ENCODE measurements at regions of chr10 and their contacts with region 1.

Region 1: GRCh38 chr10:101141616-101142532 is 10.8 kb downstream of the TLX1 start:
- DNase-seq: peak; percentile 77
- H3K4me3 ChIP-seq: no peak overlapping the region
- H3K27ac ChIP-seq: no peak overlapping the region
- H3K4me1 ChIP-seq: no peaks in the 10 kb centered on the region
- H3K27me3 ChIP-seq: peaks cover 90 to 94% of the 10 kb centered on the region in 2 experiments
- CTCF ChIP-seq: peak; percentile 96 to 98
- POLR2A ChIP-seq: no peak

Region 2: GRCh38 chr10:100697070-100697469 is 444.8 kb before region 1 on chr10:
- CTCF ChIA-PET with region 1: no interaction called
- POLR2A ChIA-PET with region 1: no interaction called
- dilution Hi-C with region 1: no loop called
- intact Hi-C with region 1: no loop called
- DNase-seq: peak; percentile 44
- H3K4me3 ChIP-seq: no peak overlapping the region
- H3K27ac ChIP-seq: no peak overlapping the region
- H3K4me1 ChIP-seq: no peaks in the 10 kb centered on the region
- H3K27me3 ChIP-seq: peaks cover 6 to 18% of the 10 kb centered on the region in 2 experiments
- CTCF ChIP-seq: no peak
- POLR2A ChIP-seq: no peak

Region 3: GRCh38 chr10:101018600-101019439 is 123.1 kb before region 1 on chr10:
- CTCF ChIA-PET with region 1: interaction called, 17 read pairs
- POLR2A ChIA-PET with region 1: no interaction called
- dilution Hi-C with region 1: no loop called
- intact Hi-C with region 1: no loop called
- DNase-seq: peak; percentile 82
- H3K4me3 ChIP-seq: no peak overlapping the region
- H3K27ac ChIP-seq: no peak overlapping the region
- H3K4me1 ChIP-seq: no peaks in the 10 kb centered on the region
- H3K27me3 ChIP-seq: no peaks in the 10 kb centered on the region
- CTCF ChIP-seq: peak; percentile 90 to 93
- POLR2A ChIP-seq: no peak

Region 4: DNA sequence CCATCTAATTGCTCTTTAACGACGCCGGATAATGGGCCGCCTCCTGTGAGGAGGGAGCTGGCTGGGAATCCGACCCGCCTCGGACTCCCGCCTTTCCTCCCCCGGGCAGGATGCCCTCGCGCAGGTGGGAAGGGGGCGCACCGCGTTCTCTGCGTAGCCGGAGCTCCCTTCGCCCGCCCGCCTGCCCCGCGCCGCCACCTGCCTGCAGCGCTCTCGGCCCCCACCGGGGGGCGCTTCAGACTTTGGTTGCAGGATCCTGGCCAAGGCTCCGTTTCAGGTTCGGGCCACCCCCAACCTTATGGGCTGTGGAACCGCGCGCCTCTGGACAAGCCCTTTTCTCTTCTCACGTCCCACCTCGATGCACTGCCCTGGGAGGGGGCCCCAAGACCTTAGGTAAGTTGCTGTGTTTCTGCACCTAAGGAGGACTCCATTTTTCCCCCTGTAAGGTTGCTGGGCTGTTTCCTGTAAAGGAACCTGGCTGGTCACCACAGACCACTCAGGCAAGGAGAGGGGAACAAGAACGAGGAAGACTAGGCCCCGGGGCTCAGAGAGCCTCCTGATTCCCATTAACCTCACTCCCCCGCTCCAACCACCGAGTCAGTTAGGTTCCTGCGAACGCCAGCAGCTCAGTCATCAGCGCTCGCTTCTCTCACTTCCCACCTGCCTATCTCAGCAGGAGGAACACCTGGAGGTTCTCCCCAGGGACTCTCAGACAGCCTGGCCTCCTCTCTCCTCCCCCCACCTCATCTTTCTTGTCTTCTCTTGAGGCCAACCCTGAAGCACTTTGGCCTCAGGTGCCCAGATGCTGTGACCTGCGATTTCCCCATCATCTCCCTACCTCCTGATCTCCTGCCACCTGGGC is 91.4 kb before region 1 on chr10:
- CTCF ChIA-PET with region 1: interaction called, 134 read pairs
- POLR2A ChIA-PET with region 1: no interaction called
- dilution Hi-C with region 1: no loop called
- intact Hi-C with region 1: no loop called
- DNase-seq: peak; percentile 49
- H3K4me3 ChIP-seq: no peak overlapping the region
- H3K27ac ChIP-seq: no peak overlapping the region
- H3K4me1 ChIP-seq: no peaks in the 10 kb centered on the region
- H3K27me3 ChIP-seq: peaks cover 36 to 38% of the 10 kb centered on the region in 2 experiments
- CTCF ChIP-seq: peak; percentile 87 to 97
- POLR2A ChIP-seq: no peak

Region 5: DNA sequence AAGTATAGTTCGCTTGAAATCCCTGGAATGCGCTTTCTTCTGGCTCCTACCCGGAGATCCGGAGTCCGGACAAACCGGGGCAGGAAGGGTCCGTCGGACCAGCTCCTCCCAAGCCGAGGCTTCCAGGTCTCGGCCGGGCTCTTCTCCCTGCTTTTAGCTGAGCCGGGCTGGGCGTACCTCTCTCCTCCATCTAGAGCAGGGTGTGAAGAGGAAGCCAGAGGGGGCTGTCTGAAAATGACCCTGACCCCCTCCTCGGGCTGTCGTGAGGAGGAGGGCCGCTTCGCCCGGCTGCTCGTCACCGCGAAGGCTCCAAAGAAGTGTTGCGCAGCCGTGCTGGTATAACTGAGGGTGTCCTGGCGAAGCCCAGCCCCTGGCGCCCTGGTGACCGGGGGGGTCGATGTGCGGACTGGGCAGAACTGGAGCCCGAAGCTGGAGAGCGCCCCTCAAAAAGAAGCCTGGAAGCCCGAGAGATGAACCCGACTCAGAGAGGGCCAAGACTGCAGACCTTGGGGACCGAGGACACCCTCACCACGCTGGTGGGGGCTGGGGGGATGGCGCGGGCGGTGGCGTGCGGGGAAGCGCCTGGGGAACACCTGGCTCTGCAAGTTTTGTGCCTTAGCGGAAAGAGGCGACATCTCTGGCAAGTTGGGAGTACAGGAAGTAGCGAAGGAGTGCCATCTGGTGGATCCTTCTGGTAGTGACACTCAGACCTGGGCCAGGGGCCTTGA is 74.4 kb before region 1 on chr10:
- CTCF ChIA-PET with region 1: interaction called, 32 read pairs
- POLR2A ChIA-PET with region 1: no interaction called
- dilution Hi-C with region 1: no loop called
- intact Hi-C with region 1: no loop called
- DNase-seq: peak; percentile 85
- H3K4me3 ChIP-seq: peak overlapping the region; percentile 47 to 60 (median 54)
- H3K27ac ChIP-seq: no peak overlapping the region
- H3K4me1 ChIP-seq: peaks cover 27% of the 10 kb centered on the region
- H3K27me3 ChIP-seq: peaks cover 0 to 1% of the 10 kb centered on the region in 2 experiments
- CTCF ChIP-seq: peak; percentile 78 to 80
- POLR2A ChIP-seq: no peak

Region 6: DNA sequence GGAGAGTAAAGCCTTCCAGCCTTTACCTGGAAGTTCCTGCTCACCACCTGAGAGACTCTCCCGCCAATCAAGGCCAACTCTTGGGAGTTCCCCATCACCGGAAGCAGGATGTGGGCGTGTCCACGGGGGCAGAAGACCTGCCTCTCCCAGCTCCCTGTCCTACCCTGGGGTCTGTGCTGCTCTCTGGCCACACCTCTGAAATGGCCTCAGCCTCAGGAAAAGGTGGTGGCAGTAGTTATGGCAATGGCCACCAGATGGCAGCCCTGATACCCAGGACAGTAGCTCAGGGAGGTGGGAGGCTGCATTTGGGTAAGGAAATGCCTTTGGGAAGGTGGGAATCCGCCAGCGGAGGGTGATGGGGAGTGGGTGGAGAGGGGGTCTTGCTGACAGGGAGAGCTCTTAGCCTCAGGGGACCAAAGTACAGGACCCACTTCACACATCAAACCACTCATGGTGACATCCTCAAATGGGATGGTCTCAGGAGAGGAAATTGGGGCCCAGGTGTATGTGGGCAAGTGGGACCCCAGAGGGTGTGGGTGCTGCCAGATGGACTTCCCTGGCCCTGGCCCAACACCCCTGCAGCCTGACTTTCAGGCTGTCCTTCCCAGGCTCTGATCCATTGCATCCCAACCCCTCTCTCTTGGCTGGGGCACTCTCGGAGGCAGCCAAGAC is 46.2 kb before region 1 on chr10:
- CTCF ChIA-PET with region 1: interaction called, 496 read pairs
- POLR2A ChIA-PET with region 1: interaction called, 5 read pairs
- dilution Hi-C with region 1: no loop called
- intact Hi-C with region 1: loop called (anchors 1 kb)
- DNase-seq: peak; percentile 63
- H3K4me3 ChIP-seq: no peak overlapping the region
- H3K27ac ChIP-seq: no peak overlapping the region
- H3K4me1 ChIP-seq: no peaks in the 10 kb centered on the region
- H3K27me3 ChIP-seq: peaks cover 7% of the 10 kb centered on the region in 2 experiments
- CTCF ChIP-seq: peak; percentile 81 to 87
- POLR2A ChIP-seq: no peak

Region 7: GRCh38 chr10:101120884-101121653 is 20.8 kb before region 1 on chr10:
- CTCF ChIA-PET with region 1: interaction called, 26 read pairs
- POLR2A ChIA-PET with region 1: no interaction called
- dilution Hi-C with region 1: no loop called
- intact Hi-C with region 1: no loop called
- DNase-seq: no peak
- H3K4me3 ChIP-seq: peak overlapping the region in 2 of 3 experiments; percentile 32 to 40
- H3K27ac ChIP-seq: no peak overlapping the region
- H3K4me1 ChIP-seq: no peaks in the 10 kb centered on the region
- H3K27me3 ChIP-seq: peaks cover 69 to 82% of the 10 kb centered on the region in 2 experiments
- CTCF ChIP-seq: no peak
- POLR2A ChIP-seq: no peak

Region 8: DNA sequence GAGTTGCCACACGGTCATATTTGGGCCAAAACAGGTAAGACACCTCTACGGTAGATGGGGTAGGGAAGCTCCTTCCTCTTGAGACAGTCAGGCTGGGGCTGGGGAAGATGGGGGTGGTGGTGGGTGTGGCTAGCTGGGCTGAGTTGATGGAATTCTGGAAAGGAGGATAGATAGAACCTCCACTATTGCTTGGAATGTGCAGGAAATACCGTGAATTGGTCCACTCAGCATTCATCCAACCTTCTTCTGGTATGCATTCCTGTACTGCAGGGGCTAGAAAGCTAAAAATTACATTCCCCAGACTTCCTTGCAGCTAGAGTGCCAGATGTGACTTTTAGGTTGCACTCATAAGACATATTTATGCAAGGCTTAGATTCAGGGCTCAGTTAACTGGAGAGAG is 14.0 kb after region 1 on chr10:
- CTCF ChIA-PET with region 1: interaction called, 32 read pairs
- POLR2A ChIA-PET with region 1: no interaction called
- dilution Hi-C with region 1: no loop called
- intact Hi-C with region 1: no loop called
- DNase-seq: no peak
- H3K4me3 ChIP-seq: no peak overlapping the region
- H3K27ac ChIP-seq: no peak overlapping the region
- H3K4me1 ChIP-seq: no peaks in the 10 kb centered on the region
- H3K27me3 ChIP-seq: peaks cover 26% of the 10 kb centered on the region in 2 experiments
- CTCF ChIP-seq: no peak
- POLR2A ChIP-seq: no peak

Region 9: GRCh38 chr10:101536800-101537199 is 394.9 kb after region 1 on chr10:
- CTCF ChIA-PET with region 1: no interaction called
- POLR2A ChIA-PET with region 1: no interaction called
- dilution Hi-C with region 1: no loop called
- intact Hi-C with region 1: no loop called
- DNase-seq: peak; percentile 18
- H3K4me3 ChIP-seq: no peak overlapping the region
- H3K27ac ChIP-seq: no peak overlapping the region
- H3K4me1 ChIP-seq: peaks cover 15% of the 10 kb centered on the region
- H3K27me3 ChIP-seq: no peaks in the 10 kb centered on the region
- CTCF ChIP-seq: peak; percentile 20 to 31
- POLR2A ChIP-seq: no peak

Measured in endothelial cell of umbilical vein (primary cell).